Activated naive CD4-positive, alpha-beta T cell treated with anti-CD3 and anti-CD28 coated beads, Interleukin-2, amount 10 ng/mL, durations not matched to agents 7 days and 5 days (primary cell): ENCODE measurements at regions of chr15 and their contacts with region 1.

Region 1: DNA sequence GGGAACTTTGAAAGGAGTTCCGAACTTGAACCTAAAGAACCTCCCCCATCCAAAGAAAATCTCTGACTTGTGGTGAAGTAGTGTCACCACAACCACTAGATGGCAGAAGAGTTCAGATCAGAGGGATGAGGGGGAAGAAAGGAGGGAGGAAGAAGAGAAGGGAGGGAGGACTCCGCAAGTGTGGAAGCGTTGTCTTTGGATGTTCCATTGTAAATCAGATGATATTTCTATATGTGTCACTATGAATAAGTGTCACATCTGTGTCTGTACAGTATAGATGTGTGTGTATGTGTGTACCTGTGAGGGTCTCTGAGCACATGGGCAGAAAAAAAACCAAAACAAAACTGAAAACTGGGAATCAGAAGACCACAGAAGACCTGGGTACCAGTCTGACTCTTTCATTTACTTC is 16.9 kb downstream of the SLC24A1 start:
- DNase-seq: peak; percentile 52
- H3K4me3 Mint-ChIP-seq: no peak overlapping the region
- H3K27ac Mint-ChIP-seq: no peak overlapping the region
- H3K4me1 Mint-ChIP-seq: peaks cover 9% of the 10 kb centered on the region
- H3K27me3 Mint-ChIP-seq: peaks cover 6% of the 10 kb centered on the region

Region 2: GRCh38 chr15:65610871-65611718 is 27.6 kb before region 1 on chr15 and contains the start of gene INTS14:
- CTCF ChIA-PET with region 1: no interaction called
- DNase-seq: peak; percentile 95
- H3K4me3 Mint-ChIP-seq: peak within 1 kb of the TSS; percentile 88
- H3K27ac Mint-ChIP-seq: peak within 1 kb of the TSS; percentile 96
- H3K4me1 Mint-ChIP-seq: peaks cover 37% of the 10 kb centered on the region
- H3K27me3 Mint-ChIP-seq: peaks cover 4% of the 10 kb centered on the region

Region 3: DNA sequence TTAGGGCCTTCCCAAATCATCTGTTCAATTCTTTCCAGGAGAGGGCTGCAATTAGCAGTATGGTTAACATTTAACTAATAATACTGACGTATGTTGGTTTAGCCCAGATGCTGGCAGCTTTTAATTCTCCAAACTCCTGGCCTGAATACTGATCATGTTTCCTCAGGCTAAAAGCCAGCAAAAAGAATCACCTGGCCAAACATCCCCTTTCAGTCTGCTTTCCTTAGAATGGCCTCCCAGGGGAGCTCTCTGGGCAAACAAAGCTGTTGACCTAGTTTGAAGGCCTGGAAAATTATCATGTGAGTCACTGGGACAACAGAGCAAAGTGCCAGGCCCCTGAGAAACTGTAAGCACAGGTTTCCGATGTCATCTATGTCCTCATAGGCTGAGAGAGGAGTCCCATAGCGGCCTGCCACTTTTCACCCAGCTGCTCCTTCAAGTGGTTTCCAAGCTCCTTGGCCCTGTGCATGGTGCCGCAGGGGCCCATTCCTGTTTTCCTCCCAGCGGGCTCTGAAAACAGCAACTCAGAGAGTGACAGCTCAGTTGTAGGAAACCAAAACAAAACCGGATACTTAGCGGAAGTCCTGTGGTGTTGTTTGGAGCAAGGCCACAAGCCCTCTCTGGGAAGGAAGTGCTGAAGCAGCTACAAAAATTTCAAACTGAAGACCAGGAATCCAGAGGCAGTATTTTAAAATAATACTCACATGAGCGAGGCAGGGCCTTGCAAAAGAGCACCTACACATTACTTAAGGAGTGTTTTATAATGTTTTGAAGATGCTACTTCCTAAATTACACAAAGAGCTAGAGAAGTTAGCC is 194.1 kb after region 1 on chr15:
- CTCF ChIA-PET with region 1: interaction called, 82 read pairs
- DNase-seq: peak; percentile 72
- H3K4me3 Mint-ChIP-seq: peak overlapping the region; percentile 64
- H3K27ac Mint-ChIP-seq: peak overlapping the region; percentile 96
- H3K4me1 Mint-ChIP-seq: peaks cover 55% of the 10 kb centered on the region
- H3K27me3 Mint-ChIP-seq: no peaks in the 10 kb centered on the region

Region 4: DNA sequence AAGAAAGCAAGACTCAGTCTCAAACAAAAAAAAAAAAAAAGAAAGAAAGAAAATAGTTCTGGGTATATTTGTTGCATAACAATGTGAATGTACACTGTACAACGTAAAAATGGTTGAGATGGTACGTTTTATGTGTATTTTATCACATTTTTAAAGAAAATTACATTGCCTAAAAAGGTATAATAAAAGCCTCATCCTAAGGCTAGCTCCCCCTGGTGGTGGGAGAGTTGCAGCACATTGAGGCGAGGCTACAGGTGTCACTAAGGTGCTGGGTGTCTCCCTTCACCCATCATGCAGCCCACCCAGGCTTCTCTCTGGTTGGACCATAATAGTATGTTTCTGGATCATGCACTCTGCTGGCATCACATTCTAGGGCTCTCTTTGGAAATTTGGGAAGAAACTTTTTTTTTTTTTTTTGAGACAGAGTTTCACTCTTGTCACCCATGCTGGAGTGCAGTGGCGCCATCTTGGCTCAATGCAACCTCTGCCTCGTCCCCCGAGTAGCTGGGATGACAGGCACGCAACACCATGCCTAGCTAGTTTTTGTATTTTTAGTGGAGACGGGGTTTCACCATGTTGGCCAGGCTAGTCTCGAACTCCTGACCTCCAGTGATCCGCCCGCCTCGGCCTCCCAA is 218.3 kb after region 1 on chr15:
- CTCF ChIA-PET with region 1: interaction called, 20 read pairs
- DNase-seq: peak; percentile 89
- H3K4me3 Mint-ChIP-seq: no peak overlapping the region
- H3K27ac Mint-ChIP-seq: no peak overlapping the region
- H3K4me1 Mint-ChIP-seq: peaks cover 8% of the 10 kb centered on the region
- H3K27me3 Mint-ChIP-seq: peaks cover 17% of the 10 kb centered on the region